Ascending aorta (tissue), 2 donors: ENCODE measurements at regions of chr15 and their contacts with region 1.

Region 1: DNA sequence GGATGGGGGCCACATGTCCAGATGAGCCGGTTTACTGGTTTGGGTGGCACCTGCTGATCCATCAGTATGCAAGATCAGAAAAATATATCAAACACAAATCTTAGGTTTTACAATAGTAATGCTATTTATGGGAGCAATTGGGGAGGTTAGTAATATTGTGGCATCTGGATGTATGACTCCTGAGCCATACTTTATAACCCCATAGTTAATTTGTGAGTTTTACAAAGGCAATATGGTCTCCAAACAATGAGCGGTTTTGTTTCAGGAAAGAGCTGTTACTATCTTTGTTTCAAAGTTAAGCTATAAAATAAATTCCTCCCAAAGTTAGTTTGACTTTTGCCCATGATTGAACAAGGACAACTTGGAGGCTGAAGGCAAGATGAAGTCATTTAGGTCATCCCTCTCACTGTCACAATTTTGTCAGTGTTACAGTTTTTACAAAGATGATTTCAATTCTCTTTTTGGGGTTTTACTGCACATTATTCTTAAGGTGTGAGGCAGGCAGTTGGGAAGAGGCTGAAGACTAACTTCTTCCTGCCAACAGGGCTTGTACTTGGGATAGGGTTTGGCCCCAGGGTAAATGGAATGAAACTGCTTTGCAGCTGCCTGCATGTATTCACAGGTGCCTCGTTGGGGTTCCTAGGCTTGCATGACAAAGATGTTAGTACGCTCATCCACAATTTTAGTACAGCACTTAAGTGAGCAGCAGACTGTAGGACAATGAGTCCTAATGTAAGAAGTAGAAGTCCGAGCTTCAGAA is 296.6 kb upstream of the NDN start:
- DNase-seq: no peak
- H3K4me3 ChIP-seq: no peak overlapping the region
- H3K27ac ChIP-seq: no peak overlapping the region
- H3K4me1 ChIP-seq: no peaks in the 10 kb centered on the region
- H3K27me3 ChIP-seq: no peaks in the 10 kb centered on the region
- CTCF ChIP-seq: no peak

Region 2: GRCh38 chr15:23823508-23823907 is 160.2 kb before region 1 on chr15:
- intact Hi-C with region 1: loop called (anchors 10 kb)
- DNase-seq: no peak
- H3K4me3 ChIP-seq: no peak overlapping the region
- H3K27ac ChIP-seq: no peak overlapping the region
- H3K4me1 ChIP-seq: no peaks in the 10 kb centered on the region
- H3K27me3 ChIP-seq: no peaks in the 10 kb centered on the region
- CTCF ChIP-seq: no peak

Region 3: DNA sequence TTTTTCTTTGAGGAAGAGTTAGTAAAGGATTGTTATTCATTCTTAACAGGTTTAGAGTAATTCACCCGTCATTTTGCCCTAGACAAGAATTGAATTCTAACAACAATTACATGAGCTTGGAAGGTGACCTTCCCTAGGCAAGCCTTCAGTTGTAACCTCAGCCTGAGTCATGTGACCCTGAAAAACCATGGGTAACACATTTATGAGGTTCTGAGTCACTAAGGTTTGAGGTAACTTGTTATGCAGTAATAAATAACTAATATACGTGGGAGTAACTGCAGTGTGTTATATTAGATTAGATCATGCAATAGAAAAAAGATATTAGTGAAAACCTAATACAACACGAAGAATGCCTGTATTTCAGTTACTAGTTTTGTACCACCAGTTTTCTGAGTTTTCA is 59.0 kb before region 1 on chr15:
- intact Hi-C with region 1: no loop called
- DNase-seq: no peak
- H3K4me3 ChIP-seq: no peak overlapping the region
- H3K27ac ChIP-seq: no peak overlapping the region
- H3K4me1 ChIP-seq: no peaks in the 10 kb centered on the region
- H3K27me3 ChIP-seq: no peaks in the 10 kb centered on the region
- CTCF ChIP-seq: no peak